ENCODE measurements at regions of chr2 and their contacts with region 1.

Region 1: DNA sequence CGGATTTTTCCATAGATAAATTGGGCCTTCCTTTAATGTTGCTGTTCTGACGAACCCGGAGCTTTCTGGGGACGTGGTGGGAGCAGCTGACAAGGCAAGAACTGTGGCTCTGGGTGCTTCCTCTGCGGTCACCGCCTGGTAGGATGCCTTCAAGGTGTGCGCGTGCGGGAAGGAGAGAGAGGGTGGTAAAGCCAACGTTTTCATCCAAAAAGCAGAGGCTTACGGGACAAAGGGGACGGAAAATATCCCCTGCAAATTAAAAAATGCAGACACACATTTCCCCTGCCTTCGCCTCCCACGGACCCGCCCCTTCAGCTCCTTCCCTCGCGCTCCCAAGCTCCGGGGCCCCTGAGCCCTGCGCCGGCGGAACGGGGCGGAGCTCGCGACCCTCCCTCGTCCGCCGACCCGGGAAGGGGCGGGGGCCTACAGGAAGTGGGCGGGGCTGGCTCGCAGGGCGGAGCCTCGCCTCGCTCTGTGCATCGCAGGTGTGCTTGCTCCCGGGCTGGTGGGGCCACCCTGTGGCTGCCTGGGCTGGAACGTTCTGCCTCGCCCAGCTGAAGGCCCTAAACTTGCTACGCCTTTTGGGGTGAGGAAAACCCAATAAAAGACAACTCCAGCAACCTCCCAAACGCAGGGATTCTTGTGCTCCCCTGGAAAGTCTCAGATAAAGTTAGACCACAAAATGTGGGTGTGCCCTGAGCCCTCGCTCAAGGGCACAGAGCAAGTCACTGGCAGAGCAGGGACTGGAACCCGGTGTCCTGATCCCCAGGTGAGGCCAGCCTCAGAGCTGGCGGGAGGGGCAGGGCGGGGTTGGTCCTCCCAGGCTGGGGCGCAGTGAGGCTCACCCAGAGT is 25.4 kb upstream of the SLC66A3 start:
- DNase-seq: no peak
- ATAC-seq: peak; percentile 76
- H3K4me3 ChIP-seq: peak overlapping the region; percentile 54; the same call in 1 of the 2 replicates
- H3K27ac ChIP-seq: no peak overlapping the region
- H3K4me1 ChIP-seq: peaks cover 8% of the 10 kb centered on the region
- H3K27me3 ChIP-seq: no peaks in the 10 kb centered on the region; a peak in 3 of 4 replicates
- CTCF ChIP-seq: peak; percentile 33 to 50 (median 43); a peak in 5 of 6 replicates
- EP300 ChIP-seq: no peak
- POLR2A ChIP-seq: peak; percentile 19; the same call in 1 of the 2 replicates
- RAD21 ChIP-seq: peak; percentile 53

Region 2: DNA sequence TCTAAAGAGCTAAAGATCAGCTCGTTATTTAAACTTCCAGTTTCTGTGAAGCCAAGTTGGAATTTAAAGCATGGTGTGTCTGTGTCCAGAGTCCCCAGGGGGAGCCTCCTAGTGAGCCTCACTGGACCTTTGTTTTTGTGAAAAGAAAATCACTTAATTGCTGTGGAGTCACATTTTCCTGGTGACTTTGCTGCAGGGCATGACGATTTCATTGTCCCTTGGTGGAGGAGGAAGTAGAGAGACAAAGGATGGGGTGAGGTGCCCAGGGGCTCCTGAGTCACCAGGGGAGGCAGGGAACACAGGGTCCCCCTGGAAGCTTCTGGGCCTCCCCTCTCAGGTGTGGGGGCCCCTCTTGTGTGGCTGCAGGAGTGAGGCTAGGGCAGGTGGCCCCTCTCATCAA is 388.7 kb before region 1 on chr2:
- CTCF ChIA-PET with region 1: no interaction called
- POLR2A ChIA-PET with region 1: no interaction called
- RAD21 ChIA-PET with region 1: no interaction called
- SMC1A ChIA-PET with region 1: no interaction called
- in situ Hi-C with region 1: no loop called
- intact Hi-C with region 1: no loop called
- DNase-seq: no peak
- ATAC-seq: no peak
- H3K4me3 ChIP-seq: no peak overlapping the region
- H3K27ac ChIP-seq: no peak overlapping the region
- H3K4me1 ChIP-seq: peaks cover 4% of the 10 kb centered on the region
- H3K27me3 ChIP-seq: no peaks in the 10 kb centered on the region
- CTCF ChIP-seq: no peak
- EP300 ChIP-seq: no peak
- POLR2A ChIP-seq: no peak
- RAD21 ChIP-seq: no peak

Region 3: GRCh38 chr2:11097038-11097720 is 32.6 kb before region 1 on chr2:
- CTCF ChIA-PET with region 1: no interaction called
- POLR2A ChIA-PET with region 1: no interaction called
- RAD21 ChIA-PET with region 1: no interaction called
- SMC1A ChIA-PET with region 1: no interaction called
- in situ Hi-C with region 1: no loop called
- intact Hi-C with region 1: no loop called
- DNase-seq: no peak
- ATAC-seq: no peak
- H3K4me3 ChIP-seq: no peak overlapping the region
- H3K27ac ChIP-seq: no peak overlapping the region
- H3K4me1 ChIP-seq: no peaks in the 10 kb centered on the region
- H3K27me3 ChIP-seq: peaks cover 0 to 4% of the 10 kb centered on the region in 2 experiments; a peak in 1 of 4 replicates
- CTCF ChIP-seq: no peak
- EP300 ChIP-seq: no peak
- POLR2A ChIP-seq: no peak
- RAD21 ChIP-seq: no peak

Region 4: DNA sequence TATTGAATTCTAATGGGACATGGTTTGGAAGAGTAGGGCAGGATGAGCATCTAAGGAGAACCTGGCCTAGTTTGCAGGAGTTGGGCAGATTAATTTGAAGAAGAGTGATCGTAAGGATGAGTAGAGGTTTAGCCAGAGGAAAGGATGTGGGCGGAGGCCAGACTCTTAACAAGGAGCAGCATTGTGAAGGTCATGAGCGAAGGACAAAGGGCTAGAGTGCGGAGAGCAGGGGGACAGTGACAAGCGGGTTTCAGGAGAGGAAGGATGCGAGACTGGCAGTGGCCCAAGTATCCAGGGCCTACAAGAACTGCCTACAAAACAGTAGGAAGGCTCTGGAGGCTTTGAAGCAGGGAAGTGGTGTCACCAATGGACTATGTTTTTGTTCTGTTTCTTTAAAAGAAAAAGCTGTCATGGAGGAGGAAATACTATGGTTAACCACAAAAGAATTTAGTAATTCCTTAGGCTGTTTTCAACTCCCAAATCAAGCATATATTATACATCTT is 45.5 kb after region 1 on chr2:
- CTCF ChIA-PET with region 1: no interaction called
- POLR2A ChIA-PET with region 1: no interaction called
- RAD21 ChIA-PET with region 1: no interaction called
- SMC1A ChIA-PET with region 1: no interaction called
- in situ Hi-C with region 1: no loop called
- intact Hi-C with region 1: no loop called
- DNase-seq: no peak
- ATAC-seq: no peak
- H3K4me3 ChIP-seq: no peak overlapping the region
- H3K27ac ChIP-seq: no peak overlapping the region
- H3K4me1 ChIP-seq: no peaks in the 10 kb centered on the region
- H3K27me3 ChIP-seq: no peaks in the 10 kb centered on the region
- CTCF ChIP-seq: no peak
- EP300 ChIP-seq: no peak
- POLR2A ChIP-seq: no peak
- RAD21 ChIP-seq: no peak

Region 5: DNA sequence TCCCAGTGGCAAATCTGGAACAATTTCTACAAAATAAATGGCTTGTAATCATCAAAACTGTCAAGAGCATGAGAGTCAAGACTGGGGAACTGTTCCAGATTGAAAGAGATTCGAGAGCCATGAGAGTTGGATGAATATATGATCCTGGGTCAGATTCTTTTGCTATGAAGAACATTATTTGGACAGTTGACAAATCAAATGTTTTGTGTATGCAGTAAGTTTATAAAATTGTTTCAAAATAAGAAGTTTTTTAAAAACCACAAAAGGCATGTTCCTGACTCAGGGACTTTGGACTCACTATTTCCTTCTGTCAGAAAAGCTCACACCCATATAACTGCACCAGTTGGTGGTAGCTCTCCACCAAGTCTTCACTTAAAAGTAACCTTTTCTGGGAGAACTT is 176.1 kb after region 1 on chr2:
- CTCF ChIA-PET with region 1: no interaction called
- POLR2A ChIA-PET with region 1: no interaction called
- RAD21 ChIA-PET with region 1: no interaction called
- SMC1A ChIA-PET with region 1: no interaction called
- in situ Hi-C with region 1: no loop called
- intact Hi-C with region 1: no loop called
- DNase-seq: no peak
- ATAC-seq: no peak
- H3K4me3 ChIP-seq: no peak overlapping the region
- H3K27ac ChIP-seq: no peak overlapping the region
- H3K4me1 ChIP-seq: no peaks in the 10 kb centered on the region
- H3K27me3 ChIP-seq: no peaks in the 10 kb centered on the region
- CTCF ChIP-seq: no peak
- EP300 ChIP-seq: no peak
- POLR2A ChIP-seq: no peak
- RAD21 ChIP-seq: no peak

Region 6: GRCh38 chr2:11344342-11344955 is 214.6 kb after region 1 on chr2 and contains the start of gene ROCK2:
- CTCF ChIA-PET with region 1: interaction called, 3 read pairs
- POLR2A ChIA-PET with region 1: no interaction called
- RAD21 ChIA-PET with region 1: no interaction called
- SMC1A ChIA-PET with region 1: no interaction called
- in situ Hi-C with region 1: no loop called
- intact Hi-C with region 1: loop called (anchors 10 kb)
- DNase-seq: no peak
- ATAC-seq: peak; percentile 46
- H3K4me3 ChIP-seq: peak within 1 kb of the TSS; percentile 95
- H3K27ac ChIP-seq: peak within 1 kb of the TSS; percentile 68
- H3K4me1 ChIP-seq: no peaks in the 10 kb centered on the region
- H3K27me3 ChIP-seq: no peaks in the 10 kb centered on the region
- CTCF ChIP-seq: no peak
- EP300 ChIP-seq: no peak
- POLR2A ChIP-seq: peak; percentile 74; the same call in 1 of the 2 replicates
- RAD21 ChIP-seq: no peak
- polyA plus RNA-seq, gene ROCK2: 4.6 to 5.8 TPM

Region 7: DNA sequence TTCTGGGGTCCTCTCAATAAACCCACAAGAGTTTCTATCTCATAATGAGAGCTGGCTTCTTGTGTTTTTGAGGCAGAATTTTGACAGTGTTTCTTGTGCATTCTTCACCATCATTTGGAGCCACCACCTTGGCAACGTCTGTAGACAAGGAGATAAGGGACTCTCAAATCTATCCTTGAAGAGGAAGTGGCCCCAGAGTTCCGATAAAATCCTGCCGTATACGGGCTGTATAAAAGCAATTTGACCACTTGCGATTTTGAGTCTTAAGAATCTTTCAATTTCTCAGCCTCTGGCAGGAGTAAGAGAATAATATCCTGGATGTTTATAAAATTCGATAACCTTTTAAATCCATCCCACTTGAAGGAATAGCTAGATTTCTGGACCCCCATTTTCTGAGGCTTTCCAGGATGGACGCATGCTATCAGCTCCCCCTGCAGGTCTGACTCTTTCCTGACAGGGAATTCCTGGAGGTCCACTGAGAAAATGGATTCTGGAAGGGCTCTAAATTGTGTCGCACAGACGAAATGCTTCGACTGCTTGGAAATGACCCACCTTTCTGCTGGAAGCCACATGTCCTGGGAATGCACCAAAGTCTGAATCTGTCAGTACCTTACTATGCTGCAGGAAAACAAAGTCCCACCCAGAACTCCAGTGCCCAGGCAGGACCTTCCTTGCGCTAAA is 282.1 kb after region 1 on chr2:
- CTCF ChIA-PET with region 1: interaction called, 39 read pairs
- POLR2A ChIA-PET with region 1: no interaction called
- RAD21 ChIA-PET with region 1: interaction called, 20 read pairs
- SMC1A ChIA-PET with region 1: interaction called, 30 read pairs
- in situ Hi-C with region 1: no loop called
- intact Hi-C with region 1: loop called (anchors 1 kb)
- DNase-seq: no peak
- ATAC-seq: peak; percentile 46
- H3K4me3 ChIP-seq: peak overlapping the region; percentile 49; the same call in 1 of the 2 replicates
- H3K27ac ChIP-seq: no peak overlapping the region
- H3K4me1 ChIP-seq: no peaks in the 10 kb centered on the region
- H3K27me3 ChIP-seq: peaks cover 0 to 1% of the 10 kb centered on the region in 2 experiments; a peak in 1 of 4 replicates
- CTCF ChIP-seq: peak; percentile 57 to 76 (median 63); a peak in 4 of 6 replicates
- EP300 ChIP-seq: no peak
- POLR2A ChIP-seq: no peak
- RAD21 ChIP-seq: peak; percentile 74

Region 8: GRCh38 chr2:11446733-11447248 is 317.0 kb after region 1 on chr2:
- CTCF ChIA-PET with region 1: interaction called, 29 read pairs
- POLR2A ChIA-PET with region 1: no interaction called
- RAD21 ChIA-PET with region 1: interaction called, 12 read pairs
- SMC1A ChIA-PET with region 1: interaction called, 19 read pairs
- in situ Hi-C with region 1: loop called (anchors 5 kb)
- intact Hi-C with region 1: loop called (anchors 1 kb)
- DNase-seq: no peak
- ATAC-seq: peak; percentile 76
- H3K4me3 ChIP-seq: no peak overlapping the region
- H3K27ac ChIP-seq: no peak overlapping the region
- H3K4me1 ChIP-seq: no peaks in the 10 kb centered on the region
- H3K27me3 ChIP-seq: no peaks in the 10 kb centered on the region
- CTCF ChIP-seq: peak; percentile 63 to 74 (median 67)
- EP300 ChIP-seq: no peak
- POLR2A ChIP-seq: no peak
- RAD21 ChIP-seq: peak; percentile 81

Region 9: GRCh38 chr2:11477994-11478393 is 348.2 kb after region 1 on chr2:
- CTCF ChIA-PET with region 1: interaction called, 4 read pairs
- POLR2A ChIA-PET with region 1: no interaction called
- RAD21 ChIA-PET with region 1: interaction called, 4 read pairs
- SMC1A ChIA-PET with region 1: interaction called, 8 read pairs
- in situ Hi-C with region 1: no loop called
- intact Hi-C with region 1: loop called (anchors 5 kb)
- DNase-seq: no peak
- ATAC-seq: peak; percentile 88
- H3K4me3 ChIP-seq: no peak overlapping the region
- H3K27ac ChIP-seq: no peak overlapping the region
- H3K4me1 ChIP-seq: no peaks in the 10 kb centered on the region
- H3K27me3 ChIP-seq: peaks cover 5 to 6% of the 10 kb centered on the region in 2 experiments; a peak in 3 of 4 replicates
- CTCF ChIP-seq: peak; percentile 67 to 83 (median 75)
- EP300 ChIP-seq: no peak
- POLR2A ChIP-seq: no peak
- RAD21 ChIP-seq: peak; percentile 89

Measured in GM12878 (cell line).